ENCODE measurements at regions of chr1 and their contacts with region 1.

Region 1: GRCh38 chr1:161145832-161146231 is 7.9 kb upstream of the UFC1 start:
- DNase-seq: no peak
- ATAC-seq: no peak; the same call in 1 of the 2 replicates
- H3K4me3 ChIP-seq: no peak overlapping the region
- H3K27ac ChIP-seq: no peak overlapping the region
- H3K4me1 ChIP-seq: no peaks in the 10 kb centered on the region
- H3K27me3 ChIP-seq: no peaks in the 10 kb centered on the region
- CTCF ChIP-seq: no peak

Region 2: GRCh38 chr1:161330346-161330745 is 184.5 kb after region 1 on chr1:
- CTCF ChIA-PET with region 1: no interaction called
- POLR2A ChIA-PET with region 1: interaction called, 11 read pairs
- in situ Hi-C with region 1: no loop called
- intact Hi-C with region 1: no loop called
- DNase-seq: no peak
- ATAC-seq: no peak
- H3K4me3 ChIP-seq: no peak overlapping the region
- H3K27ac ChIP-seq: no peak overlapping the region
- H3K4me1 ChIP-seq: no peaks in the 10 kb centered on the region
- H3K27me3 ChIP-seq: no peaks in the 10 kb centered on the region
- CTCF ChIP-seq: no peak